ENCODE measurements at regions of chr2 and their contacts with region 1.

Region 1: GRCh38 chr2:70301344-70302194 is at the start of gene FAM136A:
- DNase-seq: peak; percentile 94
- ATAC-seq: peak; percentile 76
- H3K4me3 Mint-ChIP-seq: peak within 1 kb of the TSS; percentile 84
- H3K27ac Mint-ChIP-seq: peak within 1 kb of the TSS; percentile 89
- H3K4me1 Mint-ChIP-seq: peaks cover 19% of the 10 kb centered on the region
- H3K27me3 Mint-ChIP-seq: peaks cover 5% of the 10 kb centered on the region; the same call in 1 of the 2 replicates
- CTCF ChIP-seq: peak; percentile 98
- total RNA-seq, gene FAM136A: 81.0 to 83.9 TPM (median 81.4 TPM) in 3 replicates

Region 2: DNA sequence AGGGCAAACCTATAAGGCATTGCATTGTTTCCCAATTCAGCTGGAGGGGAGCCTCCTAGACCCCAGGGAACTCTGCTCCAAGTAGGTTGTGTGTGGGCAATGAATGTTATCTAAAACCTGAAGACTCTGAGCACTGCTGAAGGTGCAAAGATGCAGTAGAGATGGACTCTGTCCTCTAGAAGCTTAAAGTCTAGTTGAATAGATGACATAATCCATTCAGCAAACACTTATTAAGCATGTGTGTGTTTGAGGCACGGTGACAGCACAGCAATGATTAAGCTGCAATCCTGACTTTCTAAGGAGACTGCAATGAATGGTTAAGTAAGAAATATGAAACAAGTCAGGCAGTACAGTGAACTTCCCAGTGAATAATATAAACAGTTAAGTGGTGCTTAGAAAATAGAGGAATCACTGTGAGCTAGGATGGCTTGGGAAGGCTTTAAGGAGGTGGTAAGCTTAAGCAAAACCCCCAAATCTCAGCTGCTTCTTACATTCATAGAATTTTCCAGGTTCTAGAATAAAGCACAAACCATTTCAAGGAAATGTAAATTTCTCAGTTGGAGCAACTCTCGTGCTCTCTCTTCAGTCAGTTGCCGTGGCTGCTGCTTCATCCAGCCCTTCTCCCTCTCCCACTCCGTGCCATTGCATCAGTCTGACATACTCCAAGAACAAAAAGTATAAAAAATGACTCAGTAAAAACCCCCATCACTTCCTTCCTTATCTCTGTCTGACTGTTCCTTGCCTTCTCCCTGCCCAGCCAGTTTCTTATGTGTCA is 367.5 kb before region 1 on chr2:
- CTCF ChIA-PET with region 1: no interaction called
- POLR2A ChIA-PET with region 1: no interaction called
- DNase-seq: no peak
- ATAC-seq: no peak
- H3K4me3 Mint-ChIP-seq: no peak overlapping the region
- H3K27ac Mint-ChIP-seq: no peak overlapping the region
- H3K4me1 Mint-ChIP-seq: peaks cover 15% of the 10 kb centered on the region
- H3K27me3 Mint-ChIP-seq: no peaks in the 10 kb centered on the region
- CTCF ChIP-seq: no peak

Region 3: GRCh38 chr2:70314640-70315039 is 13.1 kb after region 1 on chr2:
- CTCF ChIA-PET with region 1: interaction called, 11 read pairs
- POLR2A ChIA-PET with region 1: no interaction called
- DNase-seq: no peak
- ATAC-seq: no peak
- H3K4me3 Mint-ChIP-seq: no peak overlapping the region
- H3K27ac Mint-ChIP-seq: no peak overlapping the region
- H3K4me1 Mint-ChIP-seq: no peaks in the 10 kb centered on the region
- H3K27me3 Mint-ChIP-seq: peaks cover 38% of the 10 kb centered on the region
- CTCF ChIP-seq: no peak

Region 4: GRCh38 chr2:70328921-70329561 is 27.5 kb after region 1 on chr2:
- CTCF ChIA-PET with region 1: interaction called, 14 read pairs
- POLR2A ChIA-PET with region 1: no interaction called
- DNase-seq: no peak
- ATAC-seq: peak; percentile 84
- H3K4me3 Mint-ChIP-seq: no peak overlapping the region
- H3K27ac Mint-ChIP-seq: no peak overlapping the region
- H3K4me1 Mint-ChIP-seq: peaks cover 8% of the 10 kb centered on the region; the same call in 1 of the 2 replicates
- H3K27me3 Mint-ChIP-seq: peaks cover 34% of the 10 kb centered on the region
- CTCF ChIP-seq: no peak

Region 5: GRCh38 chr2:70498054-70498453 is 196.5 kb after region 1 on chr2:
- CTCF ChIA-PET with region 1: interaction called, 19 read pairs
- POLR2A ChIA-PET with region 1: no interaction called
- DNase-seq: no peak
- ATAC-seq: peak; percentile 96
- H3K4me3 Mint-ChIP-seq: no peak overlapping the region
- H3K27ac Mint-ChIP-seq: no peak overlapping the region
- H3K4me1 Mint-ChIP-seq: peaks cover 16% of the 10 kb centered on the region
- H3K27me3 Mint-ChIP-seq: peaks cover 22% of the 10 kb centered on the region
- CTCF ChIP-seq: peak; percentile 35; the same call in 1 of the 2 replicates

Region 6: DNA sequence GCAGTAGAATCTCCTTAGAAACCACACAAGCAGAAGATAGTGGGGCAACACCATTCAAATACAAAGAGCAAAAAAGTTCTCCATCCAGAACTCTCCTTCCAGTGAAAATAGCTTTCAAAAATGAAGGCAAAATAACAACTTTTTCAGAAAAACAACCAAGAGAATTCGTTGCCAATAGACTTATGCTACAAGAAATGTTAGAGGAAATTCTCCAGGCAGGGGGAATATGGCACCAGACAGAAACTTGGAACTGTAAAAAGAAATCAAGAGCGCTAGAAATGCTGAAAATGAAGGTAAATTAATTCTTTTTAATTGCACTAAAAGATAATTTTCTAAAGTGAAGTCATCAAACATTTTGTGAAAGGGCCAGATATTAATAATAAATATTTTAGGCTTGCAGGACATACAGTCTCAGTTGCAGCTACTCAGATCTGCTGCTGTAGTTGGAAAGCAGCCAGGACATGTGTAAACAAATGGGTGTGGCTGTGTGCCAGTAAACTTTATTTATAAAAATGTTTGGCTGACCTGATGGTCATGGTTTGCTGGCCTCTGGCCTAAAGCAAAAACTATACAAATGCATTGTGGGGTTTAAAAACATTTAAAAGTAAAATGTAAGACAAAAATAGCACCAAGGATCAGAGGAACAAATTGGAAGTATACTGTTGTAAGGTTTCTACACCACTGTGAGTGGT is 325.8 kb after region 1 on chr2:
- CTCF ChIA-PET with region 1: interaction called, 10 read pairs
- POLR2A ChIA-PET with region 1: no interaction called
- DNase-seq: no peak
- ATAC-seq: no peak
- H3K4me3 Mint-ChIP-seq: no peak overlapping the region
- H3K27ac Mint-ChIP-seq: peak overlapping the region; percentile 89
- H3K4me1 Mint-ChIP-seq: peaks cover 35% of the 10 kb centered on the region
- H3K27me3 Mint-ChIP-seq: peaks cover 3% of the 10 kb centered on the region; the same call in 1 of the 2 replicates
- CTCF ChIP-seq: no peak

Region 7: GRCh38 chr2:70647873-70648481 is 346.4 kb after region 1 on chr2:
- CTCF ChIA-PET with region 1: interaction called, 61 read pairs
- POLR2A ChIA-PET with region 1: interaction called, 3 read pairs
- DNase-seq: peak; percentile 90
- ATAC-seq: peak; percentile 76
- H3K4me3 Mint-ChIP-seq: no peak overlapping the region
- H3K27ac Mint-ChIP-seq: no peak overlapping the region
- H3K4me1 Mint-ChIP-seq: no peaks in the 10 kb centered on the region
- H3K27me3 Mint-ChIP-seq: peaks cover 37% of the 10 kb centered on the region
- CTCF ChIP-seq: peak; percentile 88